ENCODE measurements at regions of chr19 and their contacts with region 1.

Region 1: DNA sequence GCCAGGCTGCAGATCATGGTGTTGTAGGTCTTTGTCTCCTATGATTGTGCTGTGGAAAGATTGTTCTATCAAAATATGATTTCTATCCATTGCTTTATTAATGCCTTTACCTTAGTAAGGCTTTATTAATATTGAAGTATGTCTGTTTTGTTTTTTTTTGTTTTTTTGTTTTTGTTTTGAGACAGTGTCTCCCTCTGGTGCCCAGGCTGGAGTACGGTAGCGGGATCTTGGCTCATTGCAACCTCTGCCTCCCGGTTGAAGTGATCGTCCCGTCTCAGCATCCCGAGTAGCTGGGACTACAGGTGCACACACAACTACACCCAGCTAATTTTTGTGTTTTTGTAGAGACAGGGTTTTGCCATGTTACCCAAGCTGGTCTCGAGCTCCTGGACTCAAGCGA is 7.7 kb downstream of the IRGC start:
- DNase-seq: no peak
- ATAC-seq: no peak
- H3K4me3 ChIP-seq: no peak overlapping the region
- H3K27ac ChIP-seq: no peak overlapping the region
- H3K4me1 ChIP-seq: no peaks in the 10 kb centered on the region
- H3K27me3 ChIP-seq: no peaks in the 10 kb centered on the region
- CTCF ChIP-seq: peak; percentile 4

Region 2: DNA sequence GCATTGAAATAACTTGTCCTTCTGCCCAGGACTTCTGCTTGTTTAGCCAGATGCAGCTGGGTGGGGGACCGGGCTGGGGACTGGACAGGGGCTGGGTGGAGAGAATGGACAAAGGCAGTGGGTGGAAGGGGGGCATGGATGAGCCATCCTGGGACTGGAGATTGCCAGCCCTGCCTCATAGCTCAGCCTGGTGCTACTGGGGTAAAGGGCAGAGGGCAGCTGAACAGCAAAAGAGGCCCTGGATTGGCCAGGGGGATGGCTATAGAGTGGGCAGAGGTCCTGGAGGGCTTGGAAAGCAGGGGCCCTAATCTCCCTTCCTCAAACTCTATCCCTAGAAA is 36.0 kb before region 1 on chr19:
- intact Hi-C with region 1: loop called in 1 of 2 experiments (anchors 5 kb)
- DNase-seq: no peak
- ATAC-seq: no peak
- H3K4me3 ChIP-seq: no peak overlapping the region
- H3K27ac ChIP-seq: no peak overlapping the region
- H3K4me1 ChIP-seq: no peaks in the 10 kb centered on the region
- H3K27me3 ChIP-seq: peaks cover 0 to 2% (median 0%) of the 10 kb centered on the region in 3 donors
- CTCF ChIP-seq: no peak

Measured in psoas muscle (tissue), 8 donors.